G401 (cell line): ENCODE measurements at regions of chr5 and their contacts with region 1.

Region 1: GRCh38 chr5:129135633-129136032 is 41.1 kb downstream of the ISOC1 start:
- DNase-seq: no peak

Region 2: DNA sequence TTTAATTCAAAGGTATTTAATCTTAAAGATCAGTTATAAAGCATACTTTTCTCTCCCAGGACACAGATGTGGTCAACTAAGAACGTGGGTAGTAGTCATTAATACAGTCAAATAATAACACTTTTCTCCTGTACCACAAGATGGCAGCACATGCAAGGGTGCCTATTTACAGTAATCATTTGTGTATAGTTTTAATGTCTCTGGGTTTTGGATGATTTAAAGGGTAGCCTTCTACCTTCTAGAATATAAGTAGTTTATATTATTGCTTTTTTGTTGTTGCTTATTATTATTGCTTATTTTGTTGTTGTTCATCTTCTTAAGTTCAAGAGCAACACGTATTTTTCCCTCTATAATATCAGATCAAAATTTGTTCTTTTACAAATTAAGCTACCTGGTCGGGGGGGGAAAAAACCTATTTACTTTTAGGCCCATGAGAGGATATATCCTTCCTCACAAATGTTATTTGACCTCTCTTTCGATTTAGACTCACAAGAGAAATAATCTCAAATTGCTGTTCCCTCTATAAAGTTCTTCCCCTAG is 230.0 kb before region 1 on chr5:
- in situ Hi-C with region 1: loop called (anchors 25 kb)
- DNase-seq: peak; percentile 39

Region 3: GRCh38 chr5:129271303-129271702 is 135.7 kb after region 1 on chr5:
- in situ Hi-C with region 1: no loop called
- DNase-seq: no peak